ENCODE measurements at regions of chr1 and their contacts with region 1.

Region 1: GRCh38 chr1:183543619-183544204 is 46.5 kb downstream of the NCF2 start:
- DNase-seq: peak in 5 of 14 experiments; percentile 13 to 69 (median 62)
- ATAC-seq: peak; percentile 99
- H3K4me3 ChIP-seq: no peak overlapping the region
- H3K4me3 Mint-ChIP-seq: no peak overlapping the region
- H3K27ac ChIP-seq: no peak overlapping the region
- H3K27ac Mint-ChIP-seq: peak overlapping the region; percentile 19
- H3K4me1 ChIP-seq: no peaks in the 10 kb centered on the region
- H3K4me1 Mint-ChIP-seq: peaks cover 6% of the 10 kb centered on the region
- H3K27me3 ChIP-seq: no peaks in the 10 kb centered on the region
- H3K27me3 Mint-ChIP-seq: no peaks in the 10 kb centered on the region
- CTCF ChIP-seq: peak; percentile 57

Region 2: DNA sequence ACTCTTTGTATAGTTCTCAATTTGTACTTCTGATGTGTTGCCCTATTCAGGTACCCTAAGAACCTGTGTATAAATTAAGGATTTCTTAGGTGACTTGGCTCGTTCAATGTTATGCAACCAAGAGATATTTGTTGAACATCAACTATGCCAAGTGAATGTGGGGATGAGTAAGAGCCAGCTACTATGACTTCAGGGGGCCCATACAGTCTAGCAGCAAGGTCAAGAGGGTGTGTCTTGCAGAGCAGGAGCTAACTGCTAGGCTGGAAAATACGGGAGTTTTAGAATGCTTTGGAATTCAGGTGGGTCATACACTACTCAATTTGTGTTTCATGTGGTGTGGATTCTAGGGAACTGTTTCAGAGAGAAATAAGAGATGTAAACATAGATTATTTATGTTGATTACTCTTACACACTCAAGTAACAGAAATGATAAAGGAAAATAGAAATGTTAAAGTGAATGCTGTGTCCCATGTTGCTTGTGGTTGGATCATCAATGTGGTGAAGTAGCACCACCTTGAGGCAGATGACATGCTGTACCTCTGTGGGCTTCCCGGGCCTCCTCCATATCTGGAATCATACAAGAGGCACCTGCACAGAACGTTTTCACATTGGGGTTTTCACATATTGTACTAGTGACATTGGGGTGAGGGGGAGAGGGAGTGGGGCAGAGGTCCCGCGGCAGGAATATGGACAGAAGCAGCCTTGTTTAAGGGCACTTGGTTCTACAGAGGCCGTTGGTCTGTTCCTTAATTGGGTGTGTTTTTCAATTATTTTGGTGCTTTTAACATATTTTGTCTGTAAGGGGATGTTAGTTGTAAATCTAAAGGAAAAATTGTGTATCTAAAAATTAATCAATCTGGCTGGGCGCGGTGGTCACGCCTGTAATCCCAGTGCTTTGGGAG is 79.4 kb after region 1 on chr1:
- CTCF ChIA-PET with region 1: no interaction called
- POLR2A ChIA-PET with region 1: no interaction called
- intact Hi-C with region 1: loop called (anchors 5 to 10 kb)
- DNase-seq: peak; percentile 18 to 76 (median 36)
- ATAC-seq: peak; percentile 99
- H3K4me3 ChIP-seq: no peak overlapping the region
- H3K4me3 Mint-ChIP-seq: no peak overlapping the region
- H3K27ac ChIP-seq: no peak overlapping the region
- H3K27ac Mint-ChIP-seq: peak overlapping the region; percentile 60
- H3K4me1 ChIP-seq: no peaks in the 10 kb centered on the region
- H3K4me1 Mint-ChIP-seq: peaks cover 25% of the 10 kb centered on the region
- H3K27me3 ChIP-seq: no peaks in the 10 kb centered on the region
- H3K27me3 Mint-ChIP-seq: no peaks in the 10 kb centered on the region
- CTCF ChIP-seq: peak; percentile 64

Region 3: GRCh38 chr1:183628537-183628936 is 84.8 kb after region 1 on chr1:
- CTCF ChIA-PET with region 1: no interaction called
- POLR2A ChIA-PET with region 1: no interaction called
- intact Hi-C with region 1: loop called (anchors 5 to 10 kb)
- DNase-seq: no peak
- ATAC-seq: no peak
- H3K4me3 ChIP-seq: no peak overlapping the region
- H3K4me3 Mint-ChIP-seq: peak overlapping the region; percentile 2
- H3K27ac ChIP-seq: peak overlapping the region in 1 of 2 donors; percentile 10
- H3K27ac Mint-ChIP-seq: peak overlapping the region; percentile 62
- H3K4me1 ChIP-seq: peaks cover 18% of the 10 kb centered on the region
- H3K4me1 Mint-ChIP-seq: peaks cover 47% of the 10 kb centered on the region
- H3K27me3 ChIP-seq: no peaks in the 10 kb centered on the region
- H3K27me3 Mint-ChIP-seq: no peaks in the 10 kb centered on the region
- CTCF ChIP-seq: no peak

Measured in CD4-positive, alpha-beta T cell (primary cell).